ENCODE measurements at regions of chr1 and their contacts with region 1.

Region 1: GRCh38 chr1:99808391-99809115 is 41.6 kb upstream of the AGL start:
- DNase-seq: peak; percentile 53
- H3K4me3 Mint-ChIP-seq: no peak overlapping the region
- H3K27ac Mint-ChIP-seq: no peak overlapping the region
- H3K4me1 Mint-ChIP-seq: peaks cover 8% of the 10 kb centered on the region
- H3K27me3 Mint-ChIP-seq: peaks cover 2% of the 10 kb centered on the region

Region 2: DNA sequence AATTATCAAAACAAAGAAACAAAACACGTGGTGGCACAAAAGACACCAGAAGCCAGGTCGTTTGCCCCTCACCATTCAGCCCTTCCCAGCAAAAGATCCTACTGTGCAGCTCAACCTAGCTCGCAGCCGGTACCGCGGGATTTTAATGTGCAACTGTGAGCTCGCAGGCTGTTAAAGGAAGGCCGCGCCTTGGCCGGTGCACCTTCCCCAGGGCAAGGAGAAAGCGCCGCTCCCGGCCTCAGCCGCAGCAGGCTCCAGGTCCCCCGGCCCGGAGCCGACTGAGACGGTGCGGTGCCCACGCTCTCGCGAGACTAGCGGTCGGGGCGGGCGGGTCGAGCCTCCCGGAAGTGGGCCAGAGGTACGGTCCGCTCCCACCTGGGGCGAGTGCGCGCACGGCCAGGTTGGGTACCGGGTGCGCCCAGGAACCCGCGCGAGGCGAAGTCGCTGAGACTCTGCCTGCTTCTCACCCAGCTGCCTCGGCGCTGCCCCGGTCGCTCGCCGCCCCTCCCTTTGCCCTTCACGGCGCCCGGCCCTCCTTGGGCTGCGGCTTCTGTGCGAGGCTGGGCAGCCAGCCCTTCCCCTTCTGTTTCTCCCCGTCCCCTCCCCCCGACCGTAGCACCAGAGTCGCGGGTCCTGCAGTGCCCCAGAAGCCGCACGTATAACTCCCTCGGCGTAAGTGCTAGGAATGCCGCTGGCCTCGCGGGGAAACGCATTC is 41.3 kb after region 1 on chr1 and contains the start of gene AGL:
- CTCF ChIA-PET with region 1: interaction called, 3 read pairs
- intact Hi-C with region 1: loop called (anchors 1 kb)
- DNase-seq: peak; percentile 89
- H3K4me3 Mint-ChIP-seq: peak within 1 kb of the TSS; percentile 98
- H3K27ac Mint-ChIP-seq: peak within 1 kb of the TSS; percentile 91
- H3K4me1 Mint-ChIP-seq: peaks cover 23% of the 10 kb centered on the region
- H3K27me3 Mint-ChIP-seq: no peaks in the 10 kb centered on the region
- total RNA-seq, gene AGL: 15.6 to 16.8 TPM

Region 3: GRCh38 chr1:99886841-99887240 is 78.3 kb after region 1 on chr1:
- CTCF ChIA-PET with region 1: no interaction called
- intact Hi-C with region 1: no loop called
- DNase-seq: no peak
- H3K4me3 Mint-ChIP-seq: no peak overlapping the region
- H3K27ac Mint-ChIP-seq: no peak overlapping the region
- H3K4me1 Mint-ChIP-seq: no peaks in the 10 kb centered on the region
- H3K27me3 Mint-ChIP-seq: no peaks in the 10 kb centered on the region

Region 4: DNA sequence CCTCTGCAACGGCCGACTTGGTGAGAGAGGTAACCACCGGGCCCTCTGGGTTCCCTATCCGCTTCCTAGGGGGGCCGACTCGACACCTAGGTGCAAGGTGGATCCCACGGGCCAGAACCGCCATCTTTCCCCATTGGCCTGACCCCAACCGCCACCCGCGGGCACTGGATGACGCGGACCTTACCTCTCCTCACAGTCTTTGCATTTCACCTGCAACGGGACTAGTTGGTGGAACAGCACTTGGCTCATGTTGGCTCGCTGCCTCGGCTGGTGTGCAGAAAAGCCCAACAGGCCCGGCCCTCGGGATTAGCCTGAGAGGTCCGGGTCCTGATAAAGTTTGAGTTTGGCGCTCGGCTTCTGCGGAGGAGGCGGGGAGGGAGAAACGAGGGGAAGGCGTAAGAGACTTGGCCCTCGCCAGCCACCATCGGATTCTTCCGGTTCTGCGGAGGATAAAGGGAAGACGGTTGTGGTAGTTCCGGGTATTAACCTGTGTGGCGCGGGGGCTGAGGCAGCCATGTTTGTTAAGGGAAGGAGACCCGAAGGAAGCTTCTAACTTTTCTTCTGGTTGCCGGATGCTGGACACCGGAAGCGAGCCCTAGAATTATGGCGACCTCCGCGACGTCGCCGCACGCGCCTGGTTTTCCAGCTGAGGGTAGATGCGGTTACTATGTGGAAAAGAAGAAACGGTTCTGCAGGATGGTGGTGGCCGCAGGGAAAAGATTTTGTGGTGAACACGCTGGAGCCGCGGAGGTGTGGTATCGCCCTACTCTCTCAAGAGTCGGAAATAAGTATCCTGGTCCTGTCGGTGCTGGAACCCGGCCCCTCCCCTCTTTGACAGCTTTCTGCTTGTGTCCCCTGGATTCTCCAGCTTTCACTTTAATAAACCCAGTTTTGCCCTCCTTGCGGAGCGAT is 324.3 kb after region 1 on chr1 and contains the starts of genes SASS6 and TRMT13:
- CTCF ChIA-PET with region 1: no interaction called
- intact Hi-C with region 1: loop called (anchors 1 kb)
- DNase-seq: peak; percentile 97
- H3K4me3 Mint-ChIP-seq: peak within 1 kb of the TSS; percentile 91
- H3K27ac Mint-ChIP-seq: peak within 1 kb of the TSS; percentile 87
- H3K4me1 Mint-ChIP-seq: peaks cover 37% of the 10 kb centered on the region
- H3K27me3 Mint-ChIP-seq: no peaks in the 10 kb centered on the region
- total RNA-seq, gene SASS6: 8.2 TPM
- total RNA-seq, gene TRMT13: 12.9 to 16.6 TPM

Region 5: GRCh38 chr1:100543640-100544039 is 735.1 kb after region 1 on chr1:
- CTCF ChIA-PET with region 1: no interaction called
- intact Hi-C with region 1: loop called (anchors 1 kb)
- DNase-seq: peak; percentile 75
- H3K4me3 Mint-ChIP-seq: no peak overlapping the region
- H3K27ac Mint-ChIP-seq: no peak overlapping the region
- H3K4me1 Mint-ChIP-seq: peaks cover 2% of the 10 kb centered on the region
- H3K27me3 Mint-ChIP-seq: peaks cover 23% of the 10 kb centered on the region

Region 6: GRCh38 chr1:100866041-100866900 is 1057.7 kb after region 1 on chr1:
- CTCF ChIA-PET with region 1: interaction called, 7 read pairs
- intact Hi-C with region 1: loop called (anchors 1 kb)
- DNase-seq: no peak
- H3K4me3 Mint-ChIP-seq: no peak overlapping the region
- H3K27ac Mint-ChIP-seq: no peak overlapping the region
- H3K4me1 Mint-ChIP-seq: peaks cover 2% of the 10 kb centered on the region
- H3K27me3 Mint-ChIP-seq: no peaks in the 10 kb centered on the region

Measured in activated naive CD4-positive, alpha-beta T cell treated with anti-CD3 and anti-CD28 coated beads for 36 hours (primary cell).